Ascending aorta (tissue), 2 donors: ENCODE measurements at regions of chr16 and their contacts with region 1.

Region 1: GRCh38 chr16:31880322-31880979 is 6.8 kb downstream of the ZNF267 start:
- DNase-seq: no peak
- H3K4me3 ChIP-seq: no peak overlapping the region
- H3K27ac ChIP-seq: peak overlapping the region in 1 of 2 donors; percentile 47
- H3K4me1 ChIP-seq: peaks cover 0 to 11% of the 10 kb centered on the region in 2 donors
- H3K27me3 ChIP-seq: no peaks in the 10 kb centered on the region
- CTCF ChIP-seq: no peak

Region 2: DNA sequence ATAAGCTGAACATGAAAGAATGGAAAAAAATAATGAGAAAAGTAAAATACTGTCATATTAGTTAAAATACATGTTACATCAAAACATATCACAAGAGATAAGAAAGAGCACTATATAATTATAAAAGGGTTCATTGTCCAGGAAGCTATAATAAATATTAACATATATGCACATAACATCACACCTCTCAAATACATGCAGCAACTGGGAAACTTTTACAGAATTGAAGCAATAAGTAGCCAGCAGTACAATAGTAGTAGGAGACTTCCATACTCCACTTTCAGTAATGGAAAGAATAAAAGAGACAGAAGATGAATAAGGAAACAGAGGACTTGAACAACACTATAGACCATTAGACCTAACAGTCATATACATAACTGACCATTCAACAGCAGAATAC is 262.3 kb before region 1 on chr16:
- intact Hi-C with region 1: no loop called
- DNase-seq: no peak
- H3K4me3 ChIP-seq: no peak overlapping the region
- H3K27ac ChIP-seq: no peak overlapping the region
- H3K4me1 ChIP-seq: no peaks in the 10 kb centered on the region
- H3K27me3 ChIP-seq: no peaks in the 10 kb centered on the region
- CTCF ChIP-seq: no peak

Region 3: DNA sequence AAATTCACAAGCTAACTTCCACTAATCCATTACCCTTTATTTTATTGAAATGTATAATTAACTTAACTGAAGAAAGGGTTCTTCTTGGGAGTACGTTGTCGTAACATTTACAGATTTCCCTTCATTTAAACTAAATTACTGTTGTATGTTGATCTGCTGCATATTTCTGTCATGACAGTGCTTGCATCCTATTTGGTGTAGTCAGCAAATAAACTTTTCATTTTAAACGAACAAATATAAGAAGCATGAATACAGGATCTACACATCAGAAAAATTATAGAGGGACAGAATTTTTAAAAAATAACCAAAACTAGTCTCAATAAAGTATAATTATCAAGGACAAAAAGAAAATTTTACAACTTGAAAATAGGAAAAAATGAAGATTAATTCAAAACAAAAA is 73.4 kb before region 1 on chr16:
- intact Hi-C with region 1: no loop called
- DNase-seq: no peak
- H3K4me3 ChIP-seq: no peak overlapping the region
- H3K27ac ChIP-seq: no peak overlapping the region
- H3K4me1 ChIP-seq: no peaks in the 10 kb centered on the region
- H3K27me3 ChIP-seq: no peaks in the 10 kb centered on the region
- CTCF ChIP-seq: no peak

Region 4: GRCh38 chr16:31819386-31819785 is 61.1 kb before region 1 on chr16:
- intact Hi-C with region 1: no loop called
- DNase-seq: no peak
- H3K4me3 ChIP-seq: no peak overlapping the region
- H3K27ac ChIP-seq: no peak overlapping the region
- H3K4me1 ChIP-seq: no peaks in the 10 kb centered on the region
- H3K27me3 ChIP-seq: no peaks in the 10 kb centered on the region
- CTCF ChIP-seq: no peak

Region 5: DNA sequence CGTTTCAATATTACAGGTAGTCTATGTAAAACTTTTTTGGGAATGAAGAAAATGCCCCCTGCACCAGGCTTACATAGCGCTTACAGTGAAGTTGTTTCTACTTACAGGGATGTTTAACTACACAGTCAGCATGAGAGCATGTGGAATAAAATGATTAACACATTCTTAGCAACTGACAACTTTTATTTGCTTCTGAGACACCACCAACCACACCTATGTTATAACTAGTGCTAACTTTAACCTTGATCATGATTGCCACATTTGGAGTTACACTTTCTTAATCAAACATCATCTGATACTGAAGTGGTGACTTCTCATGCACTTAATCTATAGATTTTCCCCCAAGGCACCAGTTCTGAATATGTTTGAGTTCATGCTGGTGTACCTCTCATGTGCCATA is 27.2 kb before region 1 on chr16:
- intact Hi-C with region 1: loop called (anchors 2 kb)
- DNase-seq: no peak
- H3K4me3 ChIP-seq: no peak overlapping the region
- H3K27ac ChIP-seq: no peak overlapping the region
- H3K4me1 ChIP-seq: no peaks in the 10 kb centered on the region
- H3K27me3 ChIP-seq: no peaks in the 10 kb centered on the region
- CTCF ChIP-seq: no peak